ENCODE measurements at regions of chr5 and their contacts with region 1.

Region 1: DNA sequence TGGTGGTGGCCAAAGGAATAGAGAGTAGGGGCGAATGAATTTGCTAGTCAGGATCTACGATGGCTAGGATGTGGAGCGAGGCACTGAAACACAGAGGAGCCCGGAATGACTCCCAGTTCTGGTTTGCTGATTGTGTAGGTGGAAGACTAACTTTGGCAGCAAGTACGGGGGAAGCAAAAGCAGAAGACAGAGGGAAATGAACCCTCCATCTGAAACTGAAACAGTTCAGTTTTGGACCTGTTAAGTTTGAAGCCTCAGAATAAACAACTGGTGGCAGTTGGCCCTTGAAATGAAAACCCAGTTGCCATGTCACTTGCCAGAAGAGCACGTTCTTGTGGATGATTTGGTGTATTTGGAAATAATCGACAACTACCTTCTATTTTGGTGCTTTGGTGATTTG is 15.4 kb upstream of the SMIM15 start:
- DNase-seq: no peak
- ATAC-seq: peak; percentile 91
- H3K4me3 ChIP-seq: no peak overlapping the region
- H3K27ac ChIP-seq: no peak overlapping the region
- H3K4me1 ChIP-seq: peaks cover 10% of the 10 kb centered on the region
- H3K27me3 ChIP-seq: no peaks in the 10 kb centered on the region
- CTCF ChIP-seq: no peak
- EP300 ChIP-seq: no peak
- POLR2A ChIP-seq: no peak
- RAD21 ChIP-seq: no peak

Region 2: GRCh38 chr5:61167382-61167781 is 10.3 kb before region 1 on chr5:
- CTCF ChIA-PET with region 1: interaction called, 8 read pairs
- POLR2A ChIA-PET with region 1: interaction called, 11 read pairs
- RAD21 ChIA-PET with region 1: interaction called, 5 read pairs
- SMC1A ChIA-PET with region 1: interaction called, 15 read pairs
- in situ Hi-C with region 1: no loop called
- intact Hi-C with region 1: no loop called
- DNase-seq: no peak
- ATAC-seq: peak; percentile 33
- H3K4me3 ChIP-seq: no peak overlapping the region
- H3K27ac ChIP-seq: no peak overlapping the region
- H3K4me1 ChIP-seq: no peaks in the 10 kb centered on the region; the same call in 1 of the 2 replicates
- H3K27me3 ChIP-seq: no peaks in the 10 kb centered on the region
- CTCF ChIP-seq: peak; percentile 31 to 73 (median 37); a peak in 5 of 6 replicates
- EP300 ChIP-seq: no peak
- POLR2A ChIP-seq: no peak
- RAD21 ChIP-seq: peak; percentile 84

Region 3: DNA sequence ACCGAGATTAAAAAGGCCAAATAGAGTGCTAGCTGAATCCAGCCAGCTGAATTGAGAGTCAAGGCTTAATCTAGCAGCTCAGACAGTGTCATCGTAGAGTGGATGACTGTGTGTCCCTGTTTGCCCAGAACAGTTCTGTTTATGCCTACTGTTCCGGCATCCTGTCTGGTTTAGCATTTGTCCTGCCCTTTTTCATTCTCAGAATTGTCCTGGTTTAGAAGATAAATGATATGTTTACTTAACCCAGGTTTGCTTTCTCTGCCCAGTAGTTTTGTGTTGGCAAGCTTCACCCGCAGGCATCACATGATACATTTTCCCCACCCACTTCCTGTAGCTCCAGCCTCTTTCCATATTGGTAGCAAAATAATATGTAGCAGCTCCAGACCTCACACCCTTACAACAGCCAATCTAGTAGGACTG is 113.1 kb after region 1 on chr5:
- CTCF ChIA-PET with region 1: no interaction called
- POLR2A ChIA-PET with region 1: no interaction called
- RAD21 ChIA-PET with region 1: no interaction called
- SMC1A ChIA-PET with region 1: no interaction called
- in situ Hi-C with region 1: no loop called
- intact Hi-C with region 1: no loop called
- DNase-seq: no peak
- ATAC-seq: no peak
- H3K4me3 ChIP-seq: no peak overlapping the region
- H3K27ac ChIP-seq: no peak overlapping the region
- H3K4me1 ChIP-seq: no peaks in the 10 kb centered on the region
- H3K27me3 ChIP-seq: no peaks in the 10 kb centered on the region; a peak in 1 of 4 replicates
- CTCF ChIP-seq: no peak
- EP300 ChIP-seq: no peak
- POLR2A ChIP-seq: no peak
- RAD21 ChIP-seq: no peak